GM10248 (cell line): ENCODE measurements at regions of chr5 and their contacts with region 1.

Region 1: GRCh38 chr5:172188033-172188892 is at the start of gene STK10:
- DNase-seq: peak; percentile 95
- CTCF ChIP-seq: peak; percentile 96

Region 2: GRCh38 chr5:172106511-172107356 is 81.5 kb before region 1 on chr5:
- CTCF ChIA-PET with region 1: interaction called, 175 read pairs
- POLR2A ChIA-PET with region 1: interaction called, 7 read pairs
- DNase-seq: peak; percentile 64
- CTCF ChIP-seq: peak; percentile 98

Region 3: DNA sequence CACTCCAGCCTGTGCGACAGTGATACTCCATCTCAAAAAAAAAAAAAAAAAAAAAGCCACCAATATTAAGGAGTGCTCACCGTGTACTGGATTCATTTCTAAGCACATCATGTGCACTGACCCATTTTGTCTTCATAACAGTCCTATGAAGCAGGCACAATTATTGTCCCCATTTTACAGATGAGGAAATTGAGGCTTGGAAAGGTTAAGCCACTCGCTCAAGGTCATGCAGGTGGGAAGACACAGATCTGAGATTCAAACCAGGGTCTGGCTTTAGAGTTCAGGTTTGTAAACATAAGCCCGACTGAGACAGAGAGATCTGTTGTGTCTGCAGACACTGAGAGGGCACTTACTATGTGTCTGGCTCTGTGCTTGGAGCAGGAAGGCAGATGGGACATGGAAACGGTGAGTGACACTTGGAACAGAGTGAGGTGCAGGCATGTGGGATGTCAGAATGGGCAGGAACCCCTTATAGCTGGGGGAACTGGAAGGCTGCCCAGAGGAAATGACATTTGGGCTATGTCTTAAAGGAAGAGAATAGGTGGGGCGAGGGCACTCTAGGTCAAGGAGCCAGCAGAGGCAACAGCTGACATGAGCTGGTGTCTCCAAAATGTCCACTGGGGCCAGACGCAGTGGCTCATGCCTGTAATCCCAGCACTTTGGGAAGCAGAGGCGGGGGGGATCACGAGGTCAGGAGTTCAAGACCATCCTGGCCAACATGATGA is 70.1 kb before region 1 on chr5:
- CTCF ChIA-PET with region 1: interaction called, 13 read pairs
- POLR2A ChIA-PET with region 1: no interaction called
- DNase-seq: no peak
- CTCF ChIP-seq: no peak

Region 4: DNA sequence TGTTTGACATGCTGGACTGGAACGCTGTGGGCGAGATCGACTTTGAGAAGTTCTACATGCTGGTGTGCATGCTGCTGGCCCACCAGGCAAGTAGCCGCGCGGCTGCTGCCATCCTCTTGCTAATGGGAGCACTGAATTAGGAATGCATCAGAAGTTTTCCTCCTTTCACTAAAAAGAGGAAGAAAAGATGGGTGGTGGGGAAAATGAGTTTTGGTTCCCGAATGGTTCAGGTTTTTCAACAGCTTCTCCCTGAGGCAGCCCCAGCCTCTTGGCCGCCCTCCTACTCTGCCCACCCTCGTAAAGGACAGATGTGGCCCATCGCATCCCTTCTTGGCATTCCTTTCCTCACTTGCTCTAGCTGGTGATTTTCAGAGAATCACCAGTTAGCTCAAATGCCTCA is 11.2 kb after region 1 on chr5:
- CTCF ChIA-PET with region 1: interaction called, 36 read pairs
- POLR2A ChIA-PET with region 1: no interaction called
- DNase-seq: no peak
- CTCF ChIP-seq: no peak

Region 5: DNA sequence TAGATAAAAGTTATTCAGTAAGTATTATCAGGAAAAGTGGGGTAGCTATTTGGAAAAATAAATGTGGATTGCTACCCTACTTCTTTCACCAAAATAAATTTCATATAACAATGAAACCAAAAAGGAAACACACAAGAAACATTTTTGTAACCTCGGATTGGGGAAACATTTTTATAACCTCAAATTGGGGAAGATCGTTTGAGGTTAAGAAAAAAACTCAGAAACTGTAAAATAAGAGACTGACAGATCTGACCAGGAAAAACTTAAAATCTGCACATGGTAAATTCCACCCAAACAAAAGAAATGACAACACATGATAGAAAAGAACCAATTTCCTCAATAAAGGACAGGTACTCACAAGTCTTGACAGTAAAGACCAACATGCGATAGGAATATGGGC is 19.2 kb after region 1 on chr5:
- CTCF ChIA-PET with region 1: interaction called, 23 read pairs
- POLR2A ChIA-PET with region 1: no interaction called
- DNase-seq: no peak
- CTCF ChIP-seq: no peak

Region 6: GRCh38 chr5:172223901-172224873 is 35.9 kb after region 1 on chr5:
- CTCF ChIA-PET with region 1: interaction called, 17 read pairs
- POLR2A ChIA-PET with region 1: interaction called, 9 read pairs
- DNase-seq: peak; percentile 45
- CTCF ChIP-seq: no peak

Region 7: DNA sequence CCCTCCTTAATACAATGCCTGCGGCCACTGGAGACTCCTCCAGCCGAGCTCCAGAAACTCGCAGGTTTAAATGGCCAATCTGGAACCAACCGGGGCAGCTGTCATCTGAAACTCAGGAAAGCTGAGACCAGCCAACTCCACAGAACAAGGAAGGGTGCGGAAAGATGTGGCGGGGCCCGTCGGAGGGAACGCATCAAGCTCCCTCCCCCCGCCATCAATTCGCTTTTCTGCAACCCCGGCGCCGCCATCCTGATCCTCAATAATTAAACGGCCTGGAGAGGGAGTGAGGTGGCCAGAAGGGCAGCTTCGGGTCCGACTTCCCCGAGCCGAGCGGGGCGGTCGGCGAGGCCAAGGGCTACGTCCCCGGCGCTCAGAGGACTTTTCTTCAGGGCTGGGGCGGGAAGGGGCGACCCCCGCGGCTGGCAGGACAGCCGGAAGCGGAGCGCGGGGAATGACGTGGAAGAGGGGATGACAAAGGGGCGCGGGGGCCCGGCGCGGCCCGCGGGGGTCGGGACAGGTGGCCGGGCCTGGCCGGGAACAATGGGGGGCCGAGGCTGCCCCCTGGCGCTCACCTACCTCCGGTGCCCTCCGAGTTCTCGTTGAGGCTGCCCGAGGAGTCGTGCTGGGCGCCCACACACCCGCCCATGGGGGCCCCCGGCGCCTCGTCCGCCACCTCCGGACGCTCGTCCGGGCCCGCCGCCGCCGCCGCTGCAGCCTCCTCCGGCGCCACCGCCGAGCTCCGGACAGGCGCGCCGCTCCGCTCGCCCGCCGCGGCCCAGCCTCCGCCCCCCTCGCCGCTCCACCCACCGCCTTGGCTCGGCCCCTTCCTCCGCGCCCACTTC is 95.0 kb after region 1 on chr5 and contains the start of gene UBTD2:
- CTCF ChIA-PET with region 1: interaction called, 36 read pairs
- POLR2A ChIA-PET with region 1: interaction called, 5 read pairs
- DNase-seq: peak; percentile 89
- CTCF ChIP-seq: peak; percentile 60